SK-N-SH (cell line): ENCODE measurements at regions of chr10 and their contacts with region 1.

Region 1: DNA sequence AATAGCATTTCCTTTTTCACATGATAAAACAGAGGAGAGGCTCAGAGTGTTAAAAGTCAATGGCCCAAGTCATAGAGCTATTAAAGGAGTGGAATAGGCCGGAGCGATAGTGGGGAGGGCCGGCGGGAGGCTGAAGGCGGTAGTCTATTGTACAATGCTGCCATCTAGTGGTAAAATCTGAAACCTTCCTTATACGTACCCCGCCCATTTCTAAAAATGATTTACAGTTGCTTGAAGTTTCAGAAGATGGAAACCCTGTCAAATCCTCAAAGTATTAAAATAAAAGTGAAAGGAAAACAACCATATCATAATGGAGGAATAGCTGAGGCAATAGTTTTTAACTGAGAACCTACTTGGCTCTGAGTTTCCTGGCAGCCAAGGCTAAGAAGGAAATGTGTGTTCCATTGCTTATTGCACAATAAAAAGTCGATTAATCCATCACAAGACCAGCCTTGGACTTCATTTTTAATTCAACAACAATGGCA is 209.1 kb downstream of the CCSER2 start:
- DNase-seq: peak; percentile 85
- H3K4me3 ChIP-seq: no peak overlapping the region; a peak in 1 of 4 replicates
- H3K27ac ChIP-seq: no peak overlapping the region
- H3K4me1 ChIP-seq: peaks cover 10 to 16% of the 10 kb centered on the region in 2 experiments; a peak in 3 of 4 replicates
- H3K27me3 ChIP-seq: no peaks in the 10 kb centered on the region
- CTCF ChIP-seq: peak; percentile 90
- EP300 ChIP-seq: no peak
- RAD21 ChIP-seq: peak; percentile 95

Region 2: DNA sequence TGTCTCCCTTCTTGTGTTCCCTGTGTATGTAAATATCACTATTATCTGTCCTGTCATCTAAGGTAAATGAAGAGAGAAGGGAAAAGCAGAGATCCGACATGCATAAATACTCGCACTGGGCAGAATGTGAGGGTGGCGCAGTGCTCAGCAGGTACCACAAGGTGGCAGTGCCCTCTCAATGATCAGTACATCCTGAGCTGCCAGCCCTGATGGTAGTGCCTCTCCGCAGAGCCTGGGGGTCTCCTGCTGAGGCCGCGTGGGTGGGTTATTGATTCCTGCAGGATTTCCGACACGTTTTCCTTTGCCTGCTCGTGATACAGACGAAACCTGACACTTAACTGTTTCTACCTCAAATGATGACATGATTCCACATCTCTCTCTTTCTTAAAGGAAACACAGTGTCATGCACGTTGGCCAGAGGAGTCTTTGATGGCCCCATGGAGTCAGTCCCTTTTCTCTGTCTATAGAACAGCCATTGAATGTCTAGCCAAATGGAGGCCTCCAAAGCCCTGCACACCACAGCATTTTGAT is 272.8 kb before region 1 on chr10:
- CTCF ChIA-PET with region 1: interaction called, 201 read pairs
- POLR2A ChIA-PET with region 1: no interaction called
- DNase-seq: peak; percentile 78
- H3K4me3 ChIP-seq: peak overlapping the region in 1 of 2 experiments; percentile 43; a peak in 1 of 4 replicates
- H3K27ac ChIP-seq: no peak overlapping the region
- H3K4me1 ChIP-seq: peaks cover 4 to 11% of the 10 kb centered on the region in 2 experiments; a peak in 3 of 4 replicates
- H3K27me3 ChIP-seq: no peaks in the 10 kb centered on the region
- CTCF ChIP-seq: peak; percentile 96
- EP300 ChIP-seq: no peak
- RAD21 ChIP-seq: peak; percentile 93

Region 3: GRCh38 chr10:84328418-84329195 is 208.9 kb before region 1 on chr10 and contains the start of gene CCSER2:
- CTCF ChIA-PET with region 1: interaction called, 16 read pairs
- POLR2A ChIA-PET with region 1: interaction called, 3 read pairs
- DNase-seq: peak; percentile 100
- H3K4me3 ChIP-seq: peak within 1 kb of the TSS; percentile 71 to 79
- H3K27ac ChIP-seq: peak within 1 kb of the TSS; percentile 81 to 87
- H3K4me1 ChIP-seq: peaks cover 10 to 13% of the 10 kb centered on the region in 2 experiments; a peak in 3 of 4 replicates
- H3K27me3 ChIP-seq: no peaks in the 10 kb centered on the region
- CTCF ChIP-seq: peak; percentile 23
- EP300 ChIP-seq: no peak
- RAD21 ChIP-seq: no peak
- polyA plus RNA-seq, gene CCSER2: 8.5 and 12.2 TPM in 2 replicates

Region 4: GRCh38 chr10:84360637-84361365 is 176.7 kb before region 1 on chr10:
- CTCF ChIA-PET with region 1: interaction called, 13 read pairs
- POLR2A ChIA-PET with region 1: no interaction called
- DNase-seq: no peak
- H3K4me3 ChIP-seq: no peak overlapping the region
- H3K27ac ChIP-seq: no peak overlapping the region; a peak in 1 of 4 replicates
- H3K4me1 ChIP-seq: peaks cover 0 to 3% of the 10 kb centered on the region in 2 experiments; a peak in 2 of 4 replicates
- H3K27me3 ChIP-seq: no peaks in the 10 kb centered on the region
- CTCF ChIP-seq: no peak
- EP300 ChIP-seq: no peak
- RAD21 ChIP-seq: no peak

Region 5: GRCh38 chr10:84510121-84510520 is 27.4 kb before region 1 on chr10:
- CTCF ChIA-PET with region 1: interaction called, 34 read pairs
- POLR2A ChIA-PET with region 1: no interaction called
- DNase-seq: no peak
- H3K4me3 ChIP-seq: no peak overlapping the region
- H3K27ac ChIP-seq: peak overlapping the region; percentile 32 to 92
- H3K4me1 ChIP-seq: peaks cover 9 to 16% of the 10 kb centered on the region in 2 experiments
- H3K27me3 ChIP-seq: no peaks in the 10 kb centered on the region
- CTCF ChIP-seq: no peak
- EP300 ChIP-seq: no peak
- RAD21 ChIP-seq: no peak